A549 (cell line): ENCODE measurements at regions of chr15 and their contacts with region 1.

Region 1: GRCh38 chr15:42736793-42737528 is at the start of gene CDAN1:
- DNase-seq: peak; percentile 69 to 89
- ATAC-seq: peak; percentile 97
- H3K4me3 ChIP-seq: peak within 1 kb of the TSS; percentile 99
- H3K27ac ChIP-seq: peak within 1 kb of the TSS; percentile 75 to 92
- H3K4me1 ChIP-seq: peaks cover 10% of the 10 kb centered on the region
- CTCF ChIP-seq: no peak
- EP300 ChIP-seq: no peak
- POLR2A ChIP-seq: peak; percentile 76
- RAD21 ChIP-seq: no peak
- polyA plus RNA-seq, gene CDAN1: 2.9 and 4.0 TPM in 2 replicates

Region 2: DNA sequence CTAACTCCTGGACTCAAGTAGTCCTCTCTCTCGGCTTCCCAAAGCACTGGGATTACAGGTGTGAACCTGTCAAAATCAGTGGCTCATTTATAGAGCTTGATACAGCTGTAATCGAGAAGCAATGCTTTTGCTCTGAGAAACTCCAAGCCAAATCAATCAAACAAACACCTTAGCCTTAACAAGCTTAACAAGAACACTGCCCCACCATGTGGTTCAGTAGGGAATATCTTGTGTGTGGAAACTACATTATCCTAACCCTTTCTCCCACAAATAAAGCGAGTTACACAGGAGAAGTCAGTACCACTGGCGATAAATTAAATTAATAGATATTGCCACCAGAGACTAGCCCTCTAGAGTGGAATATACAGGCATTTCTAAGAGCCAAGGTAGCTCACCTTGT is 13.9 kb before region 1 on chr15:
- CTCF ChIA-PET with region 1: interaction called, 10 read pairs
- POLR2A ChIA-PET with region 1: no interaction called
- DNase-seq: peak in 1 of 2 experiments; percentile 3
- ATAC-seq: peak in 1 of 2 experiments; percentile 38; a peak in 1 of 6 replicates
- H3K4me3 ChIP-seq: no peak overlapping the region
- H3K27ac ChIP-seq: no peak overlapping the region
- H3K4me1 ChIP-seq: no peaks in the 10 kb centered on the region
- CTCF ChIP-seq: no peak
- EP300 ChIP-seq: no peak
- POLR2A ChIP-seq: no peak
- RAD21 ChIP-seq: no peak

Region 3: DNA sequence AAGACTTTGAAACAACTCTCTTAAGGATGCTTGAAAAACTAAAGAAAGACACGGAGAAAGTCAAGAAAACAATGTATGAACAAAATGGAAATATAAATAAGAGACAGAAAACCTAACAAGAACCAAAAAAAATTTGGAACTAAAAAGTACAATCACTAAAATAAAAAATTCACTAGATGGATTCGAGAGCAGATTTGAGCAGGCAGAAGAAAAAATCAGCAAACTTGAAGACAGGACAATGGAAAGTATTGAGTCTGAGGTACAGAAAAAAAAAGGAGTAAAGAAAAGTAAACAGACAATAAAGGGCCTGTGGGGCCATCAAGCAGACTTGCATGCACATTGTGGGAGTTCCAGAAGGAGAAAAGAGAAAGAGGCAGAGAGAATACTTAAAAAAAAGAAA is 13.3 kb after region 1 on chr15:
- CTCF ChIA-PET with region 1: interaction called, 11 read pairs
- POLR2A ChIA-PET with region 1: no interaction called
- DNase-seq: no peak
- ATAC-seq: no peak
- H3K4me3 ChIP-seq: no peak overlapping the region
- H3K27ac ChIP-seq: no peak overlapping the region
- H3K4me1 ChIP-seq: no peaks in the 10 kb centered on the region
- CTCF ChIP-seq: no peak
- EP300 ChIP-seq: no peak
- POLR2A ChIP-seq: no peak
- RAD21 ChIP-seq: no peak

Region 4: DNA sequence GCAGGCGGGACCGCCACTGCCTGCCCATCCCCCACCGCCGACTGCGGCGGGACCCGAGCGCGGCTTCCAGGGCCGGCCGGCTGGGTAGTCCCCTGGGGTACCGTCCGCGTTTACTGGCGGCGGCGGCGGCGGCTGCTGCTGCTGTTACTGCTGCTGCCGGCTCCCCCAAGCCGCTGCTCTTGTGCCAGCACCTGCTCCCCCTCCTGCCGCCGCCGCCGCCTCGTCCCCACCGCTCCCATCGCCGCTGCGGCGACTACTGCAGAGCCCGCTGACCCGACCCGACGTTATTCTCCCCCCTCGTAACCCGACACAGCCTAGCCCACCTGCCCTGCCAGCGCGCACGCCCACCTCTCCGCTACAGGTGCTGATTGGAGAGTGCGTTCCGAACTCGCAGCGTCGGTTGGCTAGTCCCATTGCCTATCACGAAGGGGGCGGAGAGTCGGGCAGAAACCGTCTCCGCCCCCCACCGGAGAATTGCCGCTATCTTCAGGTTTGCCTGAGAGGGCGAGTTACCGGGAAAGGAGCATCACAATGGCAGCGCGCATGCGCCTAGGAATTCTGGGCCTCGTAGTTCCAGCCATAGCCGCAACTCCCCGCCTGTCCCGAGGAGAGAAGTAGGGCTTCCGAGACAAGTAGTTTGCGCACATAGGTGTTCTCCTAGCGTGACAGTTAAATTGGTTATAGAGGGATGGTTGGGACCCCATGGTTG is 183.7 kb after region 1 on chr15 and contains the start of gene TTBK2:
- CTCF ChIA-PET with region 1: interaction called, 39 read pairs
- POLR2A ChIA-PET with region 1: no interaction called
- DNase-seq: peak; percentile 74 to 97
- ATAC-seq: peak; percentile 99 to 100
- H3K4me3 ChIP-seq: peak within 1 kb of the TSS; percentile 90
- H3K27ac ChIP-seq: peak within 1 kb of the TSS; percentile 86 to 93
- H3K4me1 ChIP-seq: peaks cover 23% of the 10 kb centered on the region; the same call in 2 of the 3 replicates
- CTCF ChIP-seq: no peak
- EP300 ChIP-seq: no peak
- POLR2A ChIP-seq: peak; percentile 58
- RAD21 ChIP-seq: no peak
- polyA plus RNA-seq, gene TTBK2: 5.3 and 5.6 TPM in 2 replicates